WTC11 (cell line): ENCODE measurements at regions of chr2 and their contacts with region 1.

Region 1: GRCh38 chr2:47386551-47386950 is 16.4 kb upstream of the MSH2 start:
- DNase-seq: no peak
- ATAC-seq: no peak
- H3K4me3 Mint-ChIP-seq: no peak overlapping the region
- H3K27ac Mint-ChIP-seq: no peak overlapping the region
- H3K4me1 Mint-ChIP-seq: no peaks in the 10 kb centered on the region
- H3K27me3 Mint-ChIP-seq: no peaks in the 10 kb centered on the region
- CTCF ChIP-seq: no peak

Region 2: DNA sequence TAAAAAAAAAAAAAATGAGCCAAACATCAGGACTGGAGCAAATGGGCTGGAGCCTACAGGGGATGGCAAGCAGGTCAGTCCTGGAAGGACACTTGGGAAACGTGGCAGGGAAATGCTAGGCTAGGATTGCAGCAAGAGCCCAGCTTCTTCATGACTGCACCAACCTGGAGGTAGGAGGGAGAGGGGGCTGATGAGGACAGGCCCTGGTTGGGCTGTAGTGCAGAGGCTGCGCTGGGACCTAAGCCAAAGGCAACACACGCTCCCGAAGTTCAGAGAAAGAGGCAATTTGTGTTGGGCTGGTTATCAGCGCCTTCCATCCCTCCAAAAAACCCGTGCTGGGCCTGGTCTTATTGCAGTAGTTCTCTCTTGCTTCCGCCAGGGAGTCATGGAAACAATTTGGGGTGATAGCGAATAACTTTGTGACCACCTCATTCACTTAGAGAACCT is 149.2 kb before region 1 on chr2:
- CTCF ChIA-PET with region 1: no interaction called
- POLR2A ChIA-PET with region 1: no interaction called
- DNase-seq: no peak
- ATAC-seq: peak; percentile 7
- H3K4me3 Mint-ChIP-seq: no peak overlapping the region
- H3K27ac Mint-ChIP-seq: peak overlapping the region; percentile 28; the same call in 1 of the 2 replicates
- H3K4me1 Mint-ChIP-seq: peaks cover 48% of the 10 kb centered on the region
- H3K27me3 Mint-ChIP-seq: peaks cover 5% of the 10 kb centered on the region; the same call in 1 of the 2 replicates
- CTCF ChIP-seq: no peak

Region 3: DNA sequence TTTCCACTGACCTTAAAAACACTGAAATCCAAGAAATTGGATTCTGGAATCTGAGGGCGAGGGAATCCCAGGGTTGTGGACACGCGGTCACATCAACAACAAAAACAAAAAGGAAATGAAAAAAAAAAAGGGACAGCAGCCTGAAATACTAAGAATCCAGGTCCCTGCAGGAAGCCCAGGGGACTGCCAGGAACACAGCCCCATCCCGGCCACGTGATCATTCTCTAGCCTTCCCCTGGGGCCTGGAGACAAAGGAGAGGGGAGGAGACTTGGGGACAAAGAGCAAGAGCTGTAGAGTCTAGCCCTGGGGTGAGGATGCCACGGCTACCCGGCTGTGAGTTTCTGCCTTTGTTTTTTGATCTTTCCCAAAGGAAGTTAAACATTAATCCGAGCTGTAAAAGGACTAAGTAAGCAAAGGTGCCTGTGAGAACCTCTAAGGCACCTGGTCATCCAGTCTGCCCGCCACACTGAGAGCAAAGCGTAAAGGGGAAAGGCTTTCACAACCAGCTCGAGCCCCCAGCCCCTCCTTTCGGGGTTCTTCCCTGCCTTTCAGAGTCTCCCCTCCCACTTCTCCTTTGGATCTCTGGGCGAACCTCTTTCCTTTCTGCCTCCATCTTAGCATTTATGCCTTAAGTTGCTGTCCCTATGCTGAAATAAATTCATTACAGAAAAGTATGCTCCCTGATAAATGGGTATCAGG is 41.5 kb before region 1 on chr2:
- CTCF ChIA-PET with region 1: interaction called, 10 read pairs
- POLR2A ChIA-PET with region 1: no interaction called
- DNase-seq: peak; percentile 95
- ATAC-seq: peak; percentile 98
- H3K4me3 Mint-ChIP-seq: peak overlapping the region; percentile 86
- H3K27ac Mint-ChIP-seq: peak overlapping the region; percentile 100
- H3K4me1 Mint-ChIP-seq: peaks cover 47% of the 10 kb centered on the region
- H3K27me3 Mint-ChIP-seq: no peaks in the 10 kb centered on the region
- CTCF ChIP-seq: no peak

Region 4: DNA sequence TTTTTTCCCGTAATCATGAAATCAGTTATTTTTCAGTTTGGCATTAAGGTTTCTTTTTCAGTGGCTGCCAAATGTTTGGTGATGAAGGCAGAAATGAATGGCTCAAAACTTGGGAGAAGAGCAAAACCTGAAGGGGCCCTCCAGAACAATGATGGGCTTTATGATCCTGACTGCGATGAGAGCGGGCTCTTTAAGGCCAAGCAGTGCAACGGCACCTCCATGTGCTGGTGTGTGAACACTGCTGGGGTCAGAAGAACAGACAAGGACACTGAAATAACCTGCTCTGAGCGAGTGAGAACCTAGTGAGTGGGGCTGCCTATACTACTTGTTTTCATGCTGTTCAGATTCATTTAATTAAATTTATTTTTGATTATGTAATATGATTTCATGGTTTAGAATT is 12.8 kb before region 1 on chr2:
- CTCF ChIA-PET with region 1: interaction called, 17 read pairs
- POLR2A ChIA-PET with region 1: no interaction called
- DNase-seq: peak; percentile 49
- ATAC-seq: peak; percentile 11
- H3K4me3 Mint-ChIP-seq: no peak overlapping the region
- H3K27ac Mint-ChIP-seq: peak overlapping the region; percentile 20; the same call in 1 of the 2 replicates
- H3K4me1 Mint-ChIP-seq: peaks cover 24% of the 10 kb centered on the region
- H3K27me3 Mint-ChIP-seq: peaks cover 9% of the 10 kb centered on the region
- CTCF ChIP-seq: no peak

Region 5: DNA sequence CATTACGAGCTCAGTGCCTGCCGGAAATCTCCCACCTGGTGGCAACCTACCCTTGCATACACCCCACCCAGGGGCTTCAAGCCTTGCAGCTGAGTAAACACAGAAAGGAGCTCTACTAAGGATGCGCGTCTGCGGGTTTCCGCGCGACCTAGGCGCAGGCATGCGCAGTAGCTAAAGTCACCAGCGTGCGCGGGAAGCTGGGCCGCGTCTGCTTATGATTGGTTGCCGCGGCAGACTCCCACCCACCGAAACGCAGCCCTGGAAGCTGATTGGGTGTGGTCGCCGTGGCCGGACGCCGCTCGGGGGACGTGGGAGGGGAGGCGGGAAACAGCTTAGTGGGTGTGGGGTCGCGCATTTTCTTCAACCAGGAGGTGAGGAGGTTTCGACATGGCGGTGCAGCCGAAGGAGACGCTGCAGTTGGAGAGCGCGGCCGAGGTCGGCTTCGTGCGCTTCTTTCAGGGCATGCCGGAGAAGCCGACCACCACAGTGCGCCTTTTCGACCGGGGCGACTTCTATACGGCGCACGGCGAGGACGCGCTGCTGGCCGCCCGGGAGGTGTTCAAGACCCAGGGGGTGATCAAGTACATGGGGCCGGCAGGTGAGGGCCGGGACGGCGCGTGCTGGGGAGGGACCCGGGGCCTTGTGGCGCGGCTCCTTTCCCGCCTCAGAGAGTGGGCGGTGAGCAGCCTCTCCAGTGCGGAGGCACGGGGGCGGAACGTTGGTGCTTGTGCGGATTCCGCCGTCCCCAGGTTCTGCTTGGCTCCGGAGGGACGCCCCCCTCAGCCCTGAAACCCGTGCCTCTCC is 16.5 kb after region 1 on chr2 and contains the start of gene MSH2:
- CTCF ChIA-PET with region 1: interaction called, 34 read pairs
- POLR2A ChIA-PET with region 1: interaction called, 4 read pairs
- DNase-seq: peak; percentile 95
- ATAC-seq: peak; percentile 91
- H3K4me3 Mint-ChIP-seq: peak within 1 kb of the TSS; percentile 91
- H3K27ac Mint-ChIP-seq: peak within 1 kb of the TSS; percentile 100
- H3K4me1 Mint-ChIP-seq: peaks cover 44% of the 10 kb centered on the region
- H3K27me3 Mint-ChIP-seq: no peaks in the 10 kb centered on the region
- CTCF ChIP-seq: no peak
- total RNA-seq, gene MSH2: 207 to 244 TPM (median 209 TPM) in 3 replicates